Posterior vena cava (tissue), 2 donors: ENCODE measurements at regions of chr1 and their contacts with region 1.

Region 1: GRCh38 chr1:194342484-194343262 is 1156.3 kb upstream of the B3GALT2 start:
- DNase-seq: no peak

Region 2: DNA sequence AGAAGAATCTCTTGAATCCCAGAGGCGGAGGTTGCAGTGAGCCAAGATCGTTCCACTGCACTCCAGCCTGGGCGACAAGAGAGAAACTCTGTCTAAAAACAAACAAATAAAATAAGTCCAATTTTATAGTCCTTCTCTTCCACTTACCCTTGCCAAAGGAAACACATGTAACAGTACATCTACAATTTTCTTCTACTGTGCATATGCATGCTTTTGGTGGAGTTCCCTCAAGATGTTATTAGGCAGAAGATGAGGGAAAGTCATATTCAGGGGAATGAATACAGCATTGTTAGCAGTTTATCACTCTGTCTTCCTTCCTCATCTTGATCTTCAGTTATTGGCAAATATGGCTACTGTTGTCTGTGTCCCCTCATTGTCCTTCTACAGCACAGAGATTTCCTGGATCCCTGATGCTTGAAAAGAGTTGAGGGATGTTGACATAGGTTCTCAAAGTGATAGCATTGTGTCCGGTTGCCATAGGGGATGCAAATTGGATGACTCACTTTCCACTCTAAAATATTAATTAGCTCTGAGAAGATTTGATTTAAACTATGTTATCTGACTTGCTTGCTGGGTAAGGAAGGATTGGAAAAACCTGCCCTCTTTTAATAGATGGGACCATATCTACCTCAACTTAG is 1092.0 kb after region 1 on chr1:
- intact Hi-C with region 1: loop called in 1 of 2 experiments (anchors 5 kb)
- DNase-seq: no peak